Left ventricle myocardium inferior (tissue), 1 donor: ENCODE measurements at regions of chr3 and their contacts with region 1.

Region 1: DNA sequence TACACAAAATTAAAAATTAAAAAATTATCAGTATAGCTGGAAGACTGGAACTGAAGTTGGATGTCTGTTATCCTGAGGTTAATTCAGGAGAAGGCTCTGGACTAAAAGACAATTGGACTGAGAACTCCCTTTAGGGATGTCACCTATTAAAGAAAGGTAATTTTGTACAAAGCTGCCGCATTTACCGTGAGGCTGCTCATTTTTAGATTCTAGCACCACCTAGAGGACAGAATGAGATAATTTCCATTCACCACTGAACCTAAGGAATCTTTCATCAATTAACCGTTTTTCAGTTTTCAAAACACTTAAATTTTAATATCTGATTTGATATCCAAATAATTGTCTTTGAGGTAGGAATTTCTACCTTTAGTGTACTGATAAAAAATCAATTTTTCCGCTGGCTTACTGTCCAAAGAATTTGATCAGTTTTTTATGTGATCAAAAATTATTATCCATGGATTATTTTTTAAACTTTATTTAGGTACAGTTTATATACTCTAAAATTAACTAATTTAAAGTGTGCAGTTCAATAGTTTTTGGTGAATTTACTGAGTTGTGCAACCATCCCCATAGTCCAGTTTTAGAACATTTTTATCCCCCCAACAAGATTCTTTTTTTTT is 106.7 kb upstream of the TNIK start:
- DNase-seq: no peak
- H3K4me3 ChIP-seq: no peak overlapping the region
- H3K27ac ChIP-seq: no peak overlapping the region
- H3K4me1 ChIP-seq: peaks cover 20% of the 10 kb centered on the region
- H3K27me3 ChIP-seq: no peaks in the 10 kb centered on the region
- CTCF ChIP-seq: peak; percentile 80

Region 2: GRCh38 chr3:170961616-170962400 is 605.1 kb before region 1 on chr3:
- intact Hi-C with region 1: loop called (anchors 5 kb)
- DNase-seq: no peak
- H3K4me3 ChIP-seq: no peak overlapping the region
- H3K27ac ChIP-seq: no peak overlapping the region
- H3K4me1 ChIP-seq: peaks cover 16% of the 10 kb centered on the region
- H3K27me3 ChIP-seq: no peaks in the 10 kb centered on the region
- CTCF ChIP-seq: peak; percentile 72

Region 3: GRCh38 chr3:171049861-171050444 is 517.0 kb before region 1 on chr3:
- intact Hi-C with region 1: loop called (anchors 10 kb)
- DNase-seq: peak; percentile 23
- H3K4me3 ChIP-seq: no peak overlapping the region
- H3K27ac ChIP-seq: no peak overlapping the region
- H3K4me1 ChIP-seq: no peaks in the 10 kb centered on the region
- H3K27me3 ChIP-seq: no peaks in the 10 kb centered on the region
- CTCF ChIP-seq: peak; percentile 72

Region 4: GRCh38 chr3:171157286-171157685 is 409.6 kb before region 1 on chr3:
- intact Hi-C with region 1: loop called (anchors 10 kb)
- DNase-seq: peak; percentile 31
- H3K4me3 ChIP-seq: no peak overlapping the region
- H3K27ac ChIP-seq: no peak overlapping the region
- H3K4me1 ChIP-seq: peaks cover 17% of the 10 kb centered on the region
- H3K27me3 ChIP-seq: no peaks in the 10 kb centered on the region
- CTCF ChIP-seq: peak; percentile 17

Region 5: GRCh38 chr3:171328419-171329082 is 238.4 kb before region 1 on chr3:
- intact Hi-C with region 1: no loop called
- DNase-seq: no peak
- H3K4me3 ChIP-seq: no peak overlapping the region
- H3K27ac ChIP-seq: peak overlapping the region; percentile 14
- H3K4me1 ChIP-seq: peaks cover 74% of the 10 kb centered on the region
- H3K27me3 ChIP-seq: no peaks in the 10 kb centered on the region
- CTCF ChIP-seq: no peak

Region 6: DNA sequence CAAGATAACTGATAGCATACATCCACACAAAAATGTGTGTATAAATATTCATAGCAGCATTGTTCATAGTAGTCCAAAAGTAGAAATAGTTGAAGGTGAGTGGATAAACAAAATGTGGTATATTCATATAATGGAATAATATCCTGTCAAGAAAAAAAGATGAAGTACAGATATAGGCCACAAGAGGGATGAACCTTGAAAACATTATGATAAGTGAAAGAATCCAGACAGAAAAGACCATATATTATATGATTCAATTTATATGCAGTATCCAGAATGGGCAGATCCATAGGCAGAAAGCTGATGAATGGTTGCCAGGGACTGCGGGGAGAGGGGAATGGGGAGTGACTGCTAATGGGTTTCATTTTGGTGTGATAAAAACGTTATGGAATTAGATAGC is 52.4 kb before region 1 on chr3:
- intact Hi-C with region 1: no loop called
- DNase-seq: no peak
- H3K4me3 ChIP-seq: no peak overlapping the region
- H3K27ac ChIP-seq: no peak overlapping the region
- H3K4me1 ChIP-seq: no peaks in the 10 kb centered on the region
- H3K27me3 ChIP-seq: no peaks in the 10 kb centered on the region
- CTCF ChIP-seq: no peak